ENCODE measurements at regions of chr4 and their contacts with region 1.

Region 1: GRCh38 chr4:76977736-76978350 is 28.3 kb downstream of the SEPTIN11 start:
- DNase-seq: no peak
- CTCF ChIP-seq: no peak

Region 2: DNA sequence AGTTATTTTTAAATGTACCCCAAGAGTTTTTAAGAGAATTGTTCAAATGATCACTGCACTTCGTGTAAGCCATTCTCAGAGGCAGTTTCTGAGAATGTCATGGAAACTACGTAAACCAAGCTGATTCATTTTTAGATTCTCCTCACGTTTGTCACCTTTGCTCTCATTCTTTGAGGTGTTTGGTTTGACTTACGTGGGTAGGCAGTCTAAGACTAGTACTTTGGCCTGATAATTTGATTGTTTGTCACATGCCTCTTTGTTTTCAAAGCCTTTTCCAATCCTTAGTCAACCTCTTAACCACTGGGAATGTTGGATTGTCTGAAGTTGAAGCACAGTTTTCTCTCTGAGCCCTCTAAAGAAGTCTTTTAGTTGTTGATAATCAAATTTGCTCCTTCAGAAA is 17.8 kb before region 1 on chr4:
- CTCF ChIA-PET with region 1: interaction called, 10 read pairs
- POLR2A ChIA-PET with region 1: interaction called, 3 read pairs
- DNase-seq: peak; percentile 51
- CTCF ChIP-seq: no peak

Region 3: GRCh38 chr4:77036206-77036605 is 58.4 kb after region 1 on chr4:
- CTCF ChIA-PET with region 1: no interaction called
- POLR2A ChIA-PET with region 1: no interaction called
- DNase-seq: no peak
- CTCF ChIP-seq: no peak

Region 4: GRCh38 chr4:77284036-77284435 is 306.2 kb after region 1 on chr4:
- CTCF ChIA-PET with region 1: no interaction called
- POLR2A ChIA-PET with region 1: no interaction called
- DNase-seq: no peak
- CTCF ChIP-seq: no peak